ENCODE measurements at regions of chr11 and their contacts with region 1.

Region 1: GRCh38 chr11:82988936-82989627 is 82.6 kb downstream of the RAB30 start:
- DNase-seq: no peak
- ATAC-seq: no peak
- H3K4me3 ChIP-seq: no peak overlapping the region
- H3K4me3 Mint-ChIP-seq: no peak overlapping the region
- H3K27ac ChIP-seq: no peak overlapping the region
- H3K27ac Mint-ChIP-seq: no peak overlapping the region
- H3K4me1 ChIP-seq: no peaks in the 10 kb centered on the region
- H3K4me1 Mint-ChIP-seq: peaks cover 6% of the 10 kb centered on the region in 2 donors
- H3K27me3 ChIP-seq: no peaks in the 10 kb centered on the region
- H3K27me3 Mint-ChIP-seq: no peaks in the 10 kb centered on the region
- CTCF ChIP-seq: no peak

Region 2: GRCh38 chr11:82867495-82868082 is 121.5 kb before region 1 on chr11:
- intact Hi-C with region 1: loop called (anchors 1 kb)
- DNase-seq: peak; percentile 55 to 88
- ATAC-seq: peak; percentile 74 to 77 (median 76)
- H3K4me3 ChIP-seq: no peak overlapping the region
- H3K4me3 Mint-ChIP-seq: peak overlapping the region; percentile 18
- H3K27ac ChIP-seq: no peak overlapping the region
- H3K27ac Mint-ChIP-seq: no peak overlapping the region
- H3K4me1 ChIP-seq: peaks cover 3% of the 10 kb centered on the region
- H3K4me1 Mint-ChIP-seq: peaks cover 8 to 10% of the 10 kb centered on the region in 2 donors
- H3K27me3 ChIP-seq: no peaks in the 10 kb centered on the region
- H3K27me3 Mint-ChIP-seq: no peaks in the 10 kb centered on the region
- CTCF ChIP-seq: peak; percentile 80

Region 3: GRCh38 chr11:82883853-82884252 is 105.2 kb before region 1 on chr11:
- intact Hi-C with region 1: no loop called
- DNase-seq: no peak
- ATAC-seq: no peak
- H3K4me3 ChIP-seq: no peak overlapping the region
- H3K4me3 Mint-ChIP-seq: no peak overlapping the region
- H3K27ac ChIP-seq: no peak overlapping the region
- H3K27ac Mint-ChIP-seq: no peak overlapping the region
- H3K4me1 ChIP-seq: no peaks in the 10 kb centered on the region
- H3K4me1 Mint-ChIP-seq: peaks cover 12 to 17% of the 10 kb centered on the region in 2 donors
- H3K27me3 ChIP-seq: no peaks in the 10 kb centered on the region
- H3K27me3 Mint-ChIP-seq: no peaks in the 10 kb centered on the region
- CTCF ChIP-seq: no peak

Region 4: DNA sequence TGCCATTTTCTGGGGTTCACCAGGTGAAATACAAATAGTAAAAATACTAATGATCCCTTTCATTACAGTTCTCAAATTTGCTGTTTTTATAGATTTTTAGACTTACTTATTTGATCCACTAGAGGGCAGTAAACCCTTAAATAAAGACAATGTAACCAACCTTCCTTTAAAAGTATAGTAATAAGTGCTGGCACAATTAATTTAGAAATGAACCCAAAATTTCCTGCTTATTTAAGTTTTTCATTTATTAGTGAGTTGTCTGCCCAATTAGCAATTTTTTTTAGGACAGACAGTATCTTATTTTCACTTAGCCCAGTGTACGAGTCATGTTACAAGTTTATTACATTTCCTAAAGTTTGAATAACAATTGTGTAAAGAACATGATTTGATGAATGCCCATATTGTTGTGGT is 82.8 kb before region 1 on chr11:
- intact Hi-C with region 1: loop called (anchors 1 kb)
- DNase-seq: peak in 1 of 2 donors; percentile 57
- ATAC-seq: no peak
- H3K4me3 ChIP-seq: no peak overlapping the region
- H3K4me3 Mint-ChIP-seq: no peak overlapping the region
- H3K27ac ChIP-seq: no peak overlapping the region
- H3K27ac Mint-ChIP-seq: no peak overlapping the region
- H3K4me1 ChIP-seq: peaks cover 8% of the 10 kb centered on the region
- H3K4me1 Mint-ChIP-seq: peaks cover 15 to 16% of the 10 kb centered on the region in 2 donors
- H3K27me3 ChIP-seq: no peaks in the 10 kb centered on the region
- H3K27me3 Mint-ChIP-seq: no peaks in the 10 kb centered on the region
- CTCF ChIP-seq: peak; percentile 82

Region 5: DNA sequence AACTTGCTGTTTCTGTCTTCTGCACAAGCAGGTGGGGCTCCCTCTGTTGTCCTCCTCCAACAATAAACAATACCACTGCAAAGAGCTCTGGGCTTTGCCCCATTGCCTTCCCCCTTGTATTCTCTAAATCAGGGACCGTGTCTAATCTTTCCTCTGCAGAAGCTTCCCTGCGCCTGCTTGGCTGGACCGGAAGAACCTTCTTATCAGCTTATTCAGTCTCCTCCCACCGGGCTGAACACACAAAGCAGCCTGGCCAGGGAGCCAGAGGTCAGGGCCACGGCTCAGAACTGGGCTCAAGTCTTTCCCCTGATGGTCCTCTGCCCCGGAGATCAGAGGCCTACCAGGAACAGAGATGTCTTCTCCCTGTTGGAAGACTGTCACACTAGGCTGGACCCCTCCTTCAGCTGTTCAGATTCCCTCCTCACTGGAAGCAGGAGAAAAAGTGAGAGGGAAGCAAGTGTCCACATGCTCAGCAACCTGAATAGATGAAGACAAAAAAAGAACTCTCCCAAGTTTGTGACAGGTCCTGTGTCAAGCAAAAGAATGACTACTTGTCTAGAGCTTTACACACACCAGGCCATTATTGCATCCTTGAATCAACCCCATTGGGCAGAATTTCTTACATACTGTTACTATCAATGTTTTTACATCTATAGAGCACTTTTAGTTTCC is 19.0 kb after region 1 on chr11:
- intact Hi-C with region 1: no loop called
- DNase-seq: no peak
- ATAC-seq: peak in 2 of 3 donors; percentile 42 to 52
- H3K4me3 ChIP-seq: no peak overlapping the region
- H3K4me3 Mint-ChIP-seq: peak overlapping the region; percentile 56
- H3K27ac ChIP-seq: no peak overlapping the region
- H3K27ac Mint-ChIP-seq: peak overlapping the region; percentile 50 to 75
- H3K4me1 ChIP-seq: peaks cover 9% of the 10 kb centered on the region
- H3K4me1 Mint-ChIP-seq: peaks cover 14 to 24% of the 10 kb centered on the region in 2 donors
- H3K27me3 ChIP-seq: no peaks in the 10 kb centered on the region
- H3K27me3 Mint-ChIP-seq: no peaks in the 10 kb centered on the region
- CTCF ChIP-seq: no peak